Activated CD8-positive, alpha-beta T cell treated with anti-CD3 and anti-CD28 coated beads for 36 hours (primary cell): ENCODE measurements at regions of chr21 and their contacts with region 1.

Region 1: GRCh38 chr21:31558962-31559367 is 100.5 kb upstream of the SOD1 start:
- DNase-seq: peak; percentile 93
- ATAC-seq: peak; percentile 85
- H3K4me3 Mint-ChIP-seq: peak overlapping the region; percentile 86
- H3K27ac Mint-ChIP-seq: no peak overlapping the region
- H3K4me1 Mint-ChIP-seq: peaks cover 34% of the 10 kb centered on the region
- H3K27me3 Mint-ChIP-seq: peaks cover 26% of the 10 kb centered on the region
- CTCF ChIP-seq: peak; percentile 27

Region 2: GRCh38 chr21:31198575-31198974 is 360.4 kb before region 1 on chr21:
- CTCF ChIA-PET with region 1: interaction called, 10 read pairs
- POLR2A ChIA-PET with region 1: no interaction called
- intact Hi-C with region 1: no loop called
- DNase-seq: no peak
- ATAC-seq: peak; percentile 58
- H3K4me3 Mint-ChIP-seq: no peak overlapping the region
- H3K27ac Mint-ChIP-seq: no peak overlapping the region
- H3K4me1 Mint-ChIP-seq: peaks cover 48% of the 10 kb centered on the region
- H3K27me3 Mint-ChIP-seq: no peaks in the 10 kb centered on the region
- CTCF ChIP-seq: peak; percentile 73

Region 3: GRCh38 chr21:31343680-31344480 is 215.1 kb before region 1 on chr21 and contains the start of gene TIAM1:
- CTCF ChIA-PET with region 1: interaction called, 4 read pairs
- POLR2A ChIA-PET with region 1: interaction called, 3 read pairs
- intact Hi-C with region 1: loop called (anchors 5 kb)
- DNase-seq: peak; percentile 47
- ATAC-seq: peak; percentile 73
- H3K4me3 Mint-ChIP-seq: peak within 1 kb of the TSS; percentile 84
- H3K27ac Mint-ChIP-seq: peak within 1 kb of the TSS; percentile 80
- H3K4me1 Mint-ChIP-seq: peaks cover 47% of the 10 kb centered on the region
- H3K27me3 Mint-ChIP-seq: peaks cover 3% of the 10 kb centered on the region
- CTCF ChIP-seq: no peak
- total RNA-seq, gene TIAM1: 34.9 to 38.5 TPM

Region 4: DNA sequence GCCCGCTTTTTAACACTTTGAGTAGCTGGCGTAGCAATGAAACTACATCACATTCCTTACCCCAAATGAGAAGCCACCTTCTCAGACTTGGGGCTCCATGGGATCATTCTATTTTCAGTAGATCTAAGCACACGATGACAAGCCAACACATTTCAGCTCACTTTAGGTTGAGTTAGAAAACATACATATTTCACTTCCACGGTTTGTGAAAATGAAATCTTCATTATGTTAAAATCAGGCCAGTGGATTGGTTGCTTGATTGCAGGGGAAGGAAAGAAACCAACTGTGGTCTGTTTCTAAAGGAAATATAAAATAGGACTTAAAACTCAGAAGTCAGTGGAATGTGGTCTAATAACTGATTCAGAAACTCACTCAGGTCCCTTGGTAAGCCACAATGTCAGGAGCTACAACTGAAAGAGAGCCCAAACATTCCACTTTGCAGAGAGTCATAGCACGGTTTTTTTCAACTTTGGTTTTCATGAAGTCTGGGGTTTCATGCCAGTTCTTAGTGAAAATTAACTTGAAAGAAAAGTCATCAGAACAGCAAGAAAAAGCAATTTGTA is 132.6 kb before region 1 on chr21:
- CTCF ChIA-PET with region 1: no interaction called
- POLR2A ChIA-PET with region 1: no interaction called
- intact Hi-C with region 1: loop called (anchors 10 kb)
- DNase-seq: peak; percentile 28
- ATAC-seq: peak; percentile 82
- H3K4me3 Mint-ChIP-seq: no peak overlapping the region
- H3K27ac Mint-ChIP-seq: peak overlapping the region; percentile 51
- H3K4me1 Mint-ChIP-seq: peaks cover 14% of the 10 kb centered on the region
- H3K27me3 Mint-ChIP-seq: no peaks in the 10 kb centered on the region
- CTCF ChIP-seq: no peak

Region 5: DNA sequence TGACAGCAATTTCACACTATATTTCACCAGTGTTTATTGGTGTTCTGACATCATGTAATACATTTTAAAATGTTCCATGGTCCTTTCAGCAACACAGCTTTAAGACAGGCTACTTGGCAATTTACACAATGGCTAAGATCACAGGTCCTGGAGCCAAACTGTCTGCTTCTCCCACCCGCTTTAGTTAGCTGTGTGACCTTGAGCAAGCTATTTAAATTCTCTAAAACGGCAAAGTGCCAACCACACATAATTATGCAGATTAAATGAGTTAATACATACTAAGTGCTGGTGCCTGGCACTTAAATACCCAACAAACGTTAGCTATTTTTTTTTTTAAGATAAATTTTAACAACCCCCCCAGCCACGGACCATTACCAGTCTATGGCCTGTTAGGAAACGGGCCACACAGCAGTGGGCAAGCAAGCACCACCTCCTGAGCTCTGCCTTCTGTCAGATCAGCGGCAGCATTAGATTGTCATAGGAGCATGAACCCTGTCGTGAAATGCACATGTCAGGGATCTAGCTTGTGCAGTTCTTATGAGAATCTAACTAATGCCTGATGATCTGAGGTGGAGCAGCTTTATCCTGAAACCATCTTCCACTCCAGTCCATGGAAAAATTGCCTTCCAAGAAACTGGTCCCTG is 127.4 kb after region 1 on chr21:
- CTCF ChIA-PET with region 1: no interaction called
- POLR2A ChIA-PET with region 1: no interaction called
- intact Hi-C with region 1: no loop called
- DNase-seq: no peak
- ATAC-seq: no peak
- H3K4me3 Mint-ChIP-seq: no peak overlapping the region
- H3K27ac Mint-ChIP-seq: no peak overlapping the region
- H3K4me1 Mint-ChIP-seq: no peaks in the 10 kb centered on the region
- H3K27me3 Mint-ChIP-seq: no peaks in the 10 kb centered on the region
- CTCF ChIP-seq: no peak